ENCODE measurements at regions of chrX and their contacts with region 1.

Region 1: DNA sequence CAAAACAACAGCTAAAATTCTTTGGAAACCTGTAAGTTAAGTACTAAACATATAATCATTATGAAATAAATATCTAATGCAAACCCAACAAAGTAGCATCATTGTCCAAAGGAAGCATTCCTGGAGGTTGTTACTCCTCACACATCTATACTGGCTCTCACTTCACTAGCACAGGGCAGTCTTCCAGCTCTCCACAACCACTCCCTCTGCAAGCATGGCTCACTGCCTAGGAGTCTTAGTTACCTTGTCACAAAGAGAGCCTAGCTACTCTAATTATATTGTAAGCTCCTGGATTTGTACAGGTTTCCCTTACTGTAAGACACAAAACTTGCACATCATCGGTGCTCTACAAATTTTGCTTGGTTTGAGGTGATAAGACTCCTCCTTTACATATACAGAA is 76.1 kb downstream of the AMMECR1 start:
- DNase-seq: peak; percentile 41
- H3K4me3 Mint-ChIP-seq: no peak overlapping the region
- H3K27ac Mint-ChIP-seq: no peak overlapping the region
- H3K4me1 Mint-ChIP-seq: peaks cover 9% of the 10 kb centered on the region
- H3K27me3 Mint-ChIP-seq: peaks cover 68% of the 10 kb centered on the region
- CTCF ChIP-seq: no peak

Region 2: GRCh38 chrX:110226931-110227330 is 14.9 kb before region 1 on chrX:
- CTCF ChIA-PET with region 1: no interaction called
- POLR2A ChIA-PET with region 1: interaction called, 15 read pairs
- intact Hi-C with region 1: no loop called
- DNase-seq: no peak
- H3K4me3 Mint-ChIP-seq: no peak overlapping the region
- H3K27ac Mint-ChIP-seq: no peak overlapping the region
- H3K4me1 Mint-ChIP-seq: peaks cover 7% of the 10 kb centered on the region
- H3K27me3 Mint-ChIP-seq: peaks cover 62% of the 10 kb centered on the region
- CTCF ChIP-seq: no peak

Region 3: DNA sequence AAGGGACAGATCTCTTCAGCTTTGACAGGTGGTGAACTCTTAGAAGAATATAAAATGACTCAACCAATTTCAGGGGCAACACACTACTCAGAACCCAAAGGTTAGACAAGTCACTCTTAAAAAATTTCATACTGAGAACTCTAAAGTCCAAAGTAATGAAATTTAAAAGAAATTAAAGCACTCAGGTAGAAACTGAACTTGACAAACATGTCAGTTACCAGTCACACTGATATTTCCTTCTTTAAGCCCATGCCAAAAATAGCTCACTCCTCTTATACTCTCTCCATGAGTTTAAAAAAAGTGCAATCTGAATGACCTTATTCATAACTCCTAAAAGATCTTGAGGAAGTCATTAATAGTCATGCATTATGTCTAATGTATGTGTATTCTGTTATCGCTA is 35.8 kb after region 1 on chrX:
- CTCF ChIA-PET with region 1: no interaction called
- POLR2A ChIA-PET with region 1: interaction called, 11 read pairs
- intact Hi-C with region 1: no loop called
- DNase-seq: no peak
- H3K4me3 Mint-ChIP-seq: no peak overlapping the region
- H3K27ac Mint-ChIP-seq: no peak overlapping the region
- H3K4me1 Mint-ChIP-seq: no peaks in the 10 kb centered on the region
- H3K27me3 Mint-ChIP-seq: peaks cover 46% of the 10 kb centered on the region
- CTCF ChIP-seq: no peak

Measured in MCF 10A (cell line).